Aorta (tissue), 5 donors: ENCODE measurements at regions of chr1 and their contacts with region 1.

Region 1: DNA sequence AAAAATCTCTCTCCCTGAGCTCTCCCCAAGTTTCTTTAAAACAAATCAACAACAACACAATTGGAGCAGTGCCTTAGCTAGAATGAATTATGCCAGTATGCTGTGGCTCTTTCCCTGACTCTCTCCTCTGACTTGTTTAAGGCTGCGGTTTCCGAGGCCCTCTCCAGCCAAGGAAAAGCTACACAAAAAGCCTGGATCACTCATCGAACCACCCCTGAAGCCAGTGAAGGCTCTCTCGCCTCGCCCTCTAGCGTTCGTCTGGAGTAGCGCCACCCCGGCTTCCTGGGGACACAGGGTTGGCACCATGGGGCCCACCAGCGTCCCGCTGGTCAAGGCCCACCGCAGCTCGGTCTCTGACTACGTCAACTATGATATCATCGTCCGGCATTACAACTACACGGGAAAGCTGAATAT is 1.9 kb downstream of the S1PR1 start:
- DNase-seq: peak; percentile 91 to 97
- ATAC-seq: peak; percentile 89
- H3K4me3 ChIP-seq: peak overlapping the region in 1 of 2 donors; percentile 75
- H3K27ac ChIP-seq: no peak overlapping the region
- H3K4me1 ChIP-seq: no peaks in the 10 kb centered on the region
- H3K27me3 ChIP-seq: no peaks in the 10 kb centered on the region

Region 2: DNA sequence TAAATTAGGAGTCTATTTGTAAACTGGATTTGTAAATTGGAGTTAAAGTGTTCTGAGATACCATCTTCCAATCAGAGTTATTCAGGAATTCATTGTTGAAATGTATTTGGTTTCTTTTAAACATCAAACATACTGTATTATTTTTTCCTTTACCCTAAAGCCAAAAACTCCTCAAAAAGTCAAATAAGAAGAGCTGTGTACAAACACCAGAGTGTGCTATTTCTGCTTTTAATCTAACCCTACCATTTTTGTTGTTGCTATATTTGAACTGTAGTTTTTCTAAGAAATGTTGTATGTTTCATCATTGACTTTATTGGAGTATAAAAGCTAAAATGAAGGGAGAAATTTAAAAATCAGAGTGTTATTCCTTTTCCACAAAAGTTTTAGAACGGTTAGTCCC is 307.0 kb before region 1 on chr1:
- intact Hi-C with region 1: loop called in 1 of 2 experiments (anchors 10 kb)
- DNase-seq: no peak
- ATAC-seq: no peak
- H3K4me3 ChIP-seq: no peak overlapping the region
- H3K27ac ChIP-seq: no peak overlapping the region
- H3K4me1 ChIP-seq: no peaks in the 10 kb centered on the region
- H3K27me3 ChIP-seq: no peaks in the 10 kb centered on the region

Region 3: GRCh38 chr1:101025657-101026504 is 212.8 kb before region 1 on chr1 and contains the start of gene DPH5:
- intact Hi-C with region 1: loop called (anchors 5 to 10 kb)
- DNase-seq: peak; percentile 93 to 97
- ATAC-seq: peak; percentile 99
- H3K4me3 ChIP-seq: peak within 1 kb of the TSS; percentile 46 to 84
- H3K27ac ChIP-seq: peak within 1 kb of the TSS in 1 of 2 donors; percentile 35
- H3K4me1 ChIP-seq: peaks cover 0 to 1% of the 10 kb centered on the region in 2 donors
- H3K27me3 ChIP-seq: no peaks in the 10 kb centered on the region
- total RNA-seq, gene DPH5: 8.6 to 17.0 TPM

Region 4: DNA sequence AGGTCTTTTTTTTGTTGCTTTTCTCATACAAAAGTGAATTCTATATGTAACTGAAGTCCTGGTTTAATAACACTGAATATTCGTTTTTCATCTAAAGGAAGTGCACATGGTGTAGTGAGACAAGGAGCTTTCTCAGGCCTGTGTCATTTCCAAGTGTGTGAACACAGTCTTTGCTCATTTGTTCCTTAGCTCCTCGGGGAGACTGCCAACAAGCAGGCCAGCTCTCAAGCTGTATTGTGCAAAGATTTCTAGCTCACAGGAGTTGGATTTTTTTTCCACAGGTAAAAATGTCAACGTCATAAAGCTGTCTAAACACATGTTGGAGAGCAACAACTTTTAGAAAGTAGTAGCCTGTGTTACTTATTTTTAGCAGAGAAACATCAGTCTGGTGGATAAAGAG is 89.7 kb before region 1 on chr1:
- intact Hi-C with region 1: loop called in 1 of 2 experiments (anchors 5 kb)
- DNase-seq: no peak
- ATAC-seq: no peak
- H3K4me3 ChIP-seq: no peak overlapping the region
- H3K27ac ChIP-seq: no peak overlapping the region
- H3K4me1 ChIP-seq: peaks cover 0 to 2% of the 10 kb centered on the region in 2 donors
- H3K27me3 ChIP-seq: no peaks in the 10 kb centered on the region

Region 5: DNA sequence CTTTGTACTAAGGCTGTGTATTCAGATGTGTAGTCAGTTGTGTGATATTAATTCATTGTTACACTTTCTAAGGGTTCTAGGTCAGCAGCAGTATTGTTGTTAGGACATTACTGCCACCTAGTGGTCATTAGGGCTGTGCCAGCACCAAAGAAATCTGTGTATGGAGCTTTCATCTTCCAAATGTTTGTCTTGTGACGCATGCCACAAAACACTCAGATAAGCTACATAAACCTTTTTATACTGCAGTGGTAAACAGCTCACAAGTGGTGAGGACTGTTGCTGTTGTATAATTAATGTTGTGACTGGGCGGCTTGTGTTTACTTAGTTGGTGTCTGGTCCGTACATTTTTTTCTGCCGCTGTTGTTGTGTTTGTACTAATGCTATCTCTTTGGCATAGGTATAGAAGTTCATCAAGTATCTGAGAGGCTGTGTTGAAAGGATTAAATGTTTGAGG is 49.8 kb after region 1 on chr1:
- intact Hi-C with region 1: loop called in 1 of 2 experiments (anchors 10 kb)
- DNase-seq: peak in 1 of 2 donors; percentile 71
- ATAC-seq: peak; percentile 90
- H3K4me3 ChIP-seq: no peak overlapping the region
- H3K27ac ChIP-seq: no peak overlapping the region
- H3K4me1 ChIP-seq: no peaks in the 10 kb centered on the region
- H3K27me3 ChIP-seq: no peaks in the 10 kb centered on the region